ENCODE measurements at regions of chr11 and their contacts with region 1.

Region 1: DNA sequence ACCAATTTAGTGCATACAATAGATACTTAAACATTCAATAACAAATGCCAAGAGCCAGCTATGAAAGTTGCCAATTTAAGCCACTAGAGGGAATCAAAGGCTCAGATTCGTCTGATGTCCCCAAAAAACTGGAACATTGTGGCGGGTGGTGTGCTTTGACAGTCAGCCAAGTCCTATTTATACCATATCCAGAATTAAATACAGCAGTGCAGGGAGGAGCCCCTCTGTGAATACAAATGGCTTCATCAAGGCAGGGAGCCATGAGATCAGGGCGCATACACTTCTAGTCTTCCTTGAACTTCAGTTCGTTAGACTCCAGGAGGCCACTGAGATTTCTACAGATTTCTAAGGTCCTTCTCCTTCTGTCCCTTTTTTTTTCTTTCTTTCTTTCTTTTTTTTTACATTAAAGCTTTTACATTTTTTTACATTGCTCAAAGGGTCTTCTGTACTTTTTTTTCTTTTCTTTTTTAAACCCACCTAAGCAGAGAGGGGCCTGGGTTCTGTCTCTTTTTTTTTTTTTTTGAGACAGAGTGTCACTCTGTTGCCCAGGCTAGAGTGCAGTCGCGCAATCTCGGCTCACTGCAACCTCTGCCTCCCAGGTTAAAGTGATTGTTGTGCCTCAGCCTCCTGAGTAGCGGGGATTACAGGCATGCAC is 41.5 kb upstream of the HSPA8 start:
- DNase-seq: peak; percentile 35

Region 2: DNA sequence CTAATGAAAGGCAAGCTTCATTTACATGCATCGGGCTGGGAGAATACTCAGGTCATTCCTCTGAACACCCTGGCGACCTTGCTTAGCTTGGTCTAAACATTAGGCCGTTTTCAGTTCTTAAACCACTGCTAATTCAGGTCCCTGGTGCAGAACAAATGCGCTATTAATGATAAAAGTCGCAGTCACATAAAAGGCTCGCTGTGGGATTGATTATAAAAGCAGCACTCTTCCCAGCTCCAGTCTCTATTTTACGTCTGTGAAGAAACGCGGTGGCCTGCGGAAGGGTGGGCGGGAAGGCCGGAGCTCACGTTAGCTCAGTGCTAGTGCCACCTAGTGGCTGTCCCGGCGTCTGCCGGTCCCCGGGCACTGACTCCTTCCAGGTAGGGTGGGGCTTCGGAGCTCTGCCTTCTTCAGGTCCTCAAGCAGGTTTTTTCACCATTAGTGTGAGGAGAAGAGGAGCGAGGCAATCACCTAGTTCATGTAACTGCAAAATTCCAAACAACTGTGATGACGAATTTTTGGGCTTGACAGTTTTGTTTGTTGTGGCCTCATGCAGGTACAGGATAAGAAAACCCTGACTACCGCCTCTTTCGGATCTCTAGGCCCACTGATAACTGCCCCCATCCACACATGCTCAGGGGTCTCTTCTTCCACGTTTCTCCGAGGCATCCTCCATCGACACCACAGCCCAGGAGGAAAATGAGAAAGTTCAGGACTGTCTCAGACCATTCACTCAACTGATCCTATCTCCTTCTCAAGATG is 158.1 kb after region 1 on chr11:
- in situ Hi-C with region 1: loop called (anchors 25 kb)
- DNase-seq: peak; percentile 52